Posterior cingulate gyrus (tissue), 11 donors: ENCODE measurements at regions of chr20 and their contacts with region 1.

Region 1: DNA sequence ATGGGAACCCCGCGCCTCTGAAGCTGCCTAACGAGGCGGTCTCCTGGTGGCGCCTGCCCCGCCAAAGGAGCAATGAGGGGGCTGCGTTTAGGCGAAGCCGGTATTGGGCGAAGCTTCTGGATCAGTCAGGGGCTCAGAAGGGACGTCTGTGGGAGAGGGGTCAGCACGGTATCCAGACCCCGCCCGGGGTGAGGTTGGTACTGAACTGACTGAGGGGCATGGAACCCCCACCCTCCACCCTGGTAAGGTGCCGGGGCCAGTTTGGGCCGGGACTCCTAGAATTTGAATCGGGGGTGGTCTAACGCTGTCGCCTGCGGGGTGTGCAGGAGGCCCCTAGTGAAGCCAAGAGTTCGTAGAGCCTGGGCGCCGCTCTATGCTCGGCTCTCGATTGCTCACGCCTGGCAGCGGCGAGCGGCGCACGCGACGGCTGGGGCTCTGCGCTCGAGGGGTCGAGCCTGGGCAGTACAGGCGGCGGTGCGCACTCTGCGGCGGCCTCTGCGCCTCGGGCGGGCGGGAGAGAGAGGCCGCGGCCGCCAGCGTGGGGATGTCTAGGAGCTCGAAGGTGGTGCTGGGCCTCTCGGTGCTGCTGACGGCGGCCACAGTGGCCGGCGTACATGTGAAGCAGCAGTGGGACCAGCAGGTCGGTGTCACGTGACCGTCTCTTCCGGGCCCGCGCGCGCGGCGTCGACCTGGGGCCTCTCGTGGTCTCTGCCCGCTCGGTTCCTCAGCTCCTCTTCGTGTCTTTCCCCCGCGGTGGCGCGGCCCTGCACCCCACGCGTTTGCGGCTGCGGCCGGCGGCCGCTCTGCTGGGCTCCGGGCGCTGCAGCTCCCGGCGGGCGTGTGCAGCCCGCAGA is at the starts of genes KAT14 and PET117:
- DNase-seq: peak; percentile 82 to 98 (median 89)

Region 2: GRCh38 chr20:17910828-17911294 is 226.8 kb before region 1 on chr20:
- intact Hi-C with region 1: no loop called
- DNase-seq: no peak

Region 3: GRCh38 chr20:17968366-17969279 is 169.0 kb before region 1 on chr20 and contains the starts of genes MGME1 and SNX5:
- intact Hi-C with region 1: loop called (anchors 2 kb)
- DNase-seq: peak; percentile 97 to 100 (median 100)